A549 (cell line): ENCODE measurements at regions of chr2 and their contacts with region 1.

Region 1: GRCh38 chr2:218671654-218672566 is at the starts of genes RNF25 and STK36:
- DNase-seq: peak; percentile 84 to 88
- ATAC-seq: peak; percentile 99
- H3K4me3 ChIP-seq: peak within 1 kb of the TSS; percentile 87
- H3K27ac ChIP-seq: peak within 1 kb of the TSS; percentile 84 to 90
- H3K4me1 ChIP-seq: peaks cover 11% of the 10 kb centered on the region; the same call in 2 of the 3 replicates
- CTCF ChIP-seq: no peak
- EP300 ChIP-seq: no peak
- POLR2A ChIP-seq: peak; percentile 88
- RAD21 ChIP-seq: no peak
- polyA plus RNA-seq, gene RNF25: 61.5 and 74.0 TPM in 2 replicates
- polyA plus RNA-seq, gene STK36: 29.9 and 40.8 TPM in 2 replicates

Region 2: DNA sequence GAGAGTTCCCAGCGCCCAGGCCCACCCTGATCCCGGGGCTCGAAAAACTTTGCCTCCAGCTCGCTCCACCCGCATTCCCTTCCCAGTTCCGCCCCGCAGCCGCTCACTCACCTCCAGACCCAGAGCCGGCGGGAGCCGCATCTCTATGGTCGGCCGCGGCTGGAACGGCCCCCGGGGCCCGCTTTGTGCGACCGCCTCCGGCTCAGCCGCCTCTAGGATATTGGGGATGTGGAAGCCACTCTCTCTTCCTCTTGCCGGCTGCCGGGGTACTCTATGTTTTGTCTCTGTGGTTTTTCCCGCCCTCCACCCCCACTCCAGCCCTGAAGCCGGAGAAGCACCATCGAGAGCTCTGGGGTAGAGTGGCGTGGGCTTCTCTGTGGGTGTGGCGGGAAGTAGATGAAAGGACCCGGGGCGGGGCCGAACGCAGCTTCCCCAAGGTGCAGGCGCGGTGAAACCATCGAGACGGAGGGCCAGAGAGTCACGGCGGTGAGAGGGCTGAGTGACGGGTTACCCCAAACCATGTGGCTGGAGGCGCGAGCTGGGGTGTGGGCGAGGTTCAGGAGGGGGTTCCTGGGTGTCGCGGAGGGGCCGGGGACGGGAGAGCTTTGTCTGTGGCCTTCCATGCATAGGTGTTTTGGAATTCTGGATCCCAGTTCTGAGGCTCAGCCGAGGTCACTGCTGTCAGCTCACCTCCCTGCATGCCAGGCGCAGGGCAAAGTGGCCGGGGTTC is 12.5 kb before region 1 on chr2 and contains the starts of genes BCS1L and ZNF142:
- CTCF ChIA-PET with region 1: interaction called, 23 read pairs
- POLR2A ChIA-PET with region 1: interaction called, 37 read pairs
- DNase-seq: peak; percentile 90 to 92
- ATAC-seq: peak; percentile 94 to 96
- H3K4me3 ChIP-seq: peak within 1 kb of the TSS; percentile 77
- H3K27ac ChIP-seq: peak within 1 kb of the TSS; percentile 93 to 95
- H3K4me1 ChIP-seq: peaks cover 14% of the 10 kb centered on the region; the same call in 2 of the 3 replicates
- CTCF ChIP-seq: no peak
- EP300 ChIP-seq: no peak
- POLR2A ChIP-seq: peak; percentile 91
- RAD21 ChIP-seq: no peak
- polyA plus RNA-seq, gene BCS1L: 47.1 and 47.2 TPM in 2 replicates
- polyA plus RNA-seq, gene ZNF142: 6.3 and 9.5 TPM in 2 replicates